Sciatic nerve (tissue), 2 donors: ENCODE measurements at regions of chr12 and their contacts with region 1.

Region 1: DNA sequence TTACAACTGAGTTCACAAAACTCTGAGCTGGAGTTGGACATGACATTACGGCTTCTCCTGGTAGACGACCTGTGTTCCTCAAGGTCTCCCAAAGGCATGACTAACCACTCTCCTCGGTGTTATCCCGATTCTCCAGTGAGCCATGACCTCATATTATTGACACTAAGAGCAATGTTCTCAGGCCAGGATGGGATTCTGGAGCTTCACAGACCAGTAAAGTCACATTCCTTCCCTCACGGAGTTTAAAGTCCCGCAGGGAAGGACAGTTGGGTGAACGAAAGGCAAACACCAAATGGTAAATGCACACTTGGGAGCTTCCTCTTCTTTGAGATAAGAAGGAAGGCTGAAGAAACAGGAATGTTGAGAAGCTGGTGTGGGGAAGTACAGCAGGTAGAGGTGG is 65.4 kb downstream of the TBC1D30 start:
- DNase-seq: no peak
- ATAC-seq: no peak

Region 2: DNA sequence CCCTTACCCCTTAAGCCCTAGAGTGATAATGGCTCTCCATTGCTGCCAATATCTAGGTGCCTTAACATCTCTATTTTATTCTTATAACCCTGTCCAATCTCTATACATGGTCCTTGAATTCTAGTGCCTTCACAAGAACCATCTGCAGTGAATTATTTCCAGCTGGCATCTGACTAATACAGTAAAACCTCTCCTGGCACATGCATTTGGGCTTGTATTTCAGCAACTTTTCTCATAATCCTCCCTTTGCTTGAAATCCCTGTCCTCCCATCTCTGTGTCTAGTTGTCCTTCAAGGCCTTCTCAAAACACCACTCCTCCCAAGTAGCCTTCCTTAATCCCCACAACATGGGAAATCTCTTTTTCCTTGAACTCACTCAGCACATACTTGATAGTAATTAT is 920.2 kb after region 1 on chr12:
- intact Hi-C with region 1: loop called (anchors 5 kb)
- DNase-seq: no peak
- ATAC-seq: no peak